ENCODE measurements at regions of chr1 and their contacts with region 1.

Region 1: GRCh38 chr1:185670187-185670627 is 64.0 kb upstream of the HMCN1 start:
- DNase-seq: peak in 1 of 2 experiments; percentile 62
- H3K4me3 ChIP-seq: no peak overlapping the region
- H3K27ac ChIP-seq: no peak overlapping the region
- H3K4me1 ChIP-seq: peaks cover 0 to 2% (median 0%) of the 10 kb centered on the region in 4 experiments; a peak in 2 of 7 replicates
- H3K27me3 ChIP-seq: no peaks in the 10 kb centered on the region
- CTCF ChIP-seq: peak in 2 of 3 experiments; percentile 57; a peak in 3 of 4 replicates
- EP300 ChIP-seq: no peak
- POLR2A ChIP-seq: no peak
- RAD21 ChIP-seq: peak; percentile 77 to 82

Region 2: DNA sequence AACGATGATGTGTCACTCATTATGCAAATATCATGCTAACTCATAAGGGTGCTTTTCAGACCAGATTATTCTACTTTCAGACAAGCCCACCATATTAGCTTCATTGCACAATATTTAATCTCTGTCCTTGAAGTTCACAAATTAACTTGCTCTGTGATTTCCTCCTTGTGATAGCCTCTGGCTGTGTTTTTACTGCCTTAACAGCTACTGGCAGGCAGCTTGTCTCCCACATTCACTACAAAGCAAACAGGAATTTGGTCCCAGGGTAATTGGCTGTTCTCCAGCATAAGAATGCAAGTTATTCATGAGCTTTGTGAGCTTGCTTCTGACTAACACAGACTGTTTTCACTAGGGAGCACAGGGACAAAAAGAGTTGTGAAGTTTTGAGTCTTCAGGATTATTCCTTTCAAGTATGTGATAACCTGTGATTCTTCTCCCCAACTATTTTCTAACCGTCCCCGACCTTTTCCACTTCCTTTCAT is 24.0 kb before region 1 on chr1:
- CTCF ChIA-PET with region 1: interaction called, 15 read pairs
- POLR2A ChIA-PET with region 1: interaction called, 3 read pairs
- DNase-seq: peak in 1 of 2 experiments; percentile 83
- H3K4me3 ChIP-seq: peak overlapping the region in 1 of 4 experiments; percentile 45; a peak in 1 of 8 replicates
- H3K27ac ChIP-seq: peak overlapping the region; percentile 66; the same call in 1 of the 2 replicates
- H3K4me1 ChIP-seq: peaks cover 0 to 13% (median 6%) of the 10 kb centered on the region in 4 experiments; a peak in 4 of 7 replicates
- H3K27me3 ChIP-seq: no peaks in the 10 kb centered on the region
- CTCF ChIP-seq: no peak
- EP300 ChIP-seq: 0 out of 3 replicates have a peak, but pooled peaks of 1 of the 2 experiments have one; percentile 60
- POLR2A ChIP-seq: peak in 1 of 2 experiments; percentile 43; a peak in 1 of 3 replicates
- RAD21 ChIP-seq: 0 out of 4 replicates have a peak, but pooled peaks of 1 of the 2 experiments have one; percentile 13

Region 3: GRCh38 chr1:185652348-185652747 is 17.9 kb before region 1 on chr1:
- CTCF ChIA-PET with region 1: interaction called, 15 read pairs
- POLR2A ChIA-PET with region 1: no interaction called
- DNase-seq: no peak
- H3K4me3 ChIP-seq: no peak overlapping the region
- H3K27ac ChIP-seq: no peak overlapping the region
- H3K4me1 ChIP-seq: 0 out of 7 replicates have a peak, but pooled peaks cover 0 to 2% (median 0%) of the 10 kb centered on the region in 4 experiments
- H3K27me3 ChIP-seq: no peaks in the 10 kb centered on the region
- CTCF ChIP-seq: peak; percentile 22 to 50 (median 42)
- EP300 ChIP-seq: no peak
- POLR2A ChIP-seq: no peak
- RAD21 ChIP-seq: peak; percentile 46 to 64

Region 4: GRCh38 chr1:185694081-185694480 is 23.9 kb after region 1 on chr1:
- CTCF ChIA-PET with region 1: interaction called, 12 read pairs
- POLR2A ChIA-PET with region 1: no interaction called
- DNase-seq: no peak
- H3K4me3 ChIP-seq: no peak overlapping the region
- H3K27ac ChIP-seq: no peak overlapping the region
- H3K4me1 ChIP-seq: no peaks in the 10 kb centered on the region
- H3K27me3 ChIP-seq: peaks cover 0 to 1% (median 0%) of the 10 kb centered on the region in 4 experiments; a peak in 2 of 7 replicates
- CTCF ChIP-seq: no peak
- EP300 ChIP-seq: no peak
- POLR2A ChIP-seq: no peak
- RAD21 ChIP-seq: no peak

Region 5: DNA sequence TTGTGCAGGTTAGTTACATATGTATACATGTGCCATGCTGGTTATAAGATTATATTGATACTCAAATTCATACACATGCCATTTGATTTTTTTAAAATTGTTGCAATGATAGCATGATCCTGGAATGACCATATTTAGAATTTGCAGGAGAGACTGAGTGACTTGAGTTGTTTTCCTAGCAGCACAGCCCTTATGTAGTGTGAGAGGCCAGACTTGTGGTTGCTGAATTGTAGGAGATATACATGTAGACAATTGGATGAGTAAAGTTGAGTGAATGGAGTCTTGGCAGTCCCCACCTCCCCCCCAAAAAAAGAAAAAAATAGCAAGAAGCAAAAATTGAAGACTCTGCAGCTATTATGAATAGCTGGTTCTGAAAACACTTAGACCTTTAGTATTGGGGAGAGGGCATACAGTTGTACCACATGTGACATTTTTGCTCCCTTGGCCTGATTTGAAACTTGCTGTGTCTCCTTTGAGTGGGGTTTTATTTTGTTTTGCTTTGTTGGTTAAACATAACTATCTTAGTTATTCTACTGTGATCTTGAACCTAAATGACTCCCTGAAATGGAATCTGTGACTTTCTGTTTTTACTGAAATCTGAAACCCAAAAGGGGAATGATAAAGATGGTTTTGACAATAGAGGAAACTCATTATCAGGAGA is 344.3 kb after region 1 on chr1:
- CTCF ChIA-PET with region 1: no interaction called
- POLR2A ChIA-PET with region 1: no interaction called
- DNase-seq: no peak
- H3K4me3 ChIP-seq: no peak overlapping the region
- H3K27ac ChIP-seq: no peak overlapping the region
- H3K4me1 ChIP-seq: no peaks in the 10 kb centered on the region
- H3K27me3 ChIP-seq: no peaks in the 10 kb centered on the region
- CTCF ChIP-seq: no peak
- EP300 ChIP-seq: no peak
- POLR2A ChIP-seq: no peak
- RAD21 ChIP-seq: no peak

Measured in H1 (cell line).